ENCODE measurements at regions of chr9 and their contacts with region 1.

Region 1: DNA sequence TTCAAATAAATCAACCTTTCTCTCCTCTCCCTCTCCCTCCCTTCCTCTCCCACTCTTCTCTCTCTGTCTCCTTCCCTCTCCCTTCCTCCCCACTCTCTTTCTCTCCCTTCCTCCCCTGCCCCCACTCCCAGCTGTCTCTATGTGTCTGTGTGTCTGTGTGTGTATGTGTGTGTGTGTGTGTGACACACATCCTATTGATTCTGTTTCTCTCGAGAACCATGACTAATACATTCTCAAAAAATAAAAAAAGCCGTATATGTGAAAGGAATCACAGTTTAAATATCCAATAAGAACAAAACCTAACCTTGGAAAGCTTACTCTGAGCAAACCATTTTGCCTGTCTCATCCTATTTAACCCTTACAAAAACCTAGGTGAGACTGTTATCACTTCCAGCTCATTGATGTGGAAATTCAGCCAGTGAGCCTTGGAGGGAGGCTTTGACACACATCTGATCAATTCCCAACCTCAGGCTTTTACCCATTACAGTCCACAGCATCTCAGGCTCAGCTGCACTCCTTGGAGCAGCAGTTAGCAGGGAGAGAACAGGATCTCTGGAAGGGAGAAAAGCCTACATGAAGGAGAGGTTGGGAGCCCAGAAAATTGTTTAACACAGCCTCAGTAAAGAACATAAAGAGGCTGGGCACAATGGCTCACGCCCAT is 8.3 kb downstream of the HSD17B3 start:
- DNase-seq: peak; percentile 52
- H3K4me3 ChIP-seq: no peak overlapping the region
- H3K27ac ChIP-seq: no peak overlapping the region
- H3K4me1 ChIP-seq: peaks cover 5% of the 10 kb centered on the region
- H3K27me3 ChIP-seq: peaks cover 8% of the 10 kb centered on the region
- CTCF ChIP-seq: no peak

Region 2: GRCh38 chr9:95552814-95553546 is 740.6 kb before region 1 on chr9:
- CTCF ChIA-PET with region 1: no interaction called
- dilution Hi-C with region 1: no loop called
- in situ Hi-C with region 1: no loop called
- intact Hi-C with region 1: no loop called
- DNase-seq: no peak
- H3K4me3 ChIP-seq: no peak overlapping the region
- H3K27ac ChIP-seq: no peak overlapping the region
- H3K4me1 ChIP-seq: no peaks in the 10 kb centered on the region
- H3K27me3 ChIP-seq: peaks cover 2% of the 10 kb centered on the region
- CTCF ChIP-seq: no peak

Region 3: DNA sequence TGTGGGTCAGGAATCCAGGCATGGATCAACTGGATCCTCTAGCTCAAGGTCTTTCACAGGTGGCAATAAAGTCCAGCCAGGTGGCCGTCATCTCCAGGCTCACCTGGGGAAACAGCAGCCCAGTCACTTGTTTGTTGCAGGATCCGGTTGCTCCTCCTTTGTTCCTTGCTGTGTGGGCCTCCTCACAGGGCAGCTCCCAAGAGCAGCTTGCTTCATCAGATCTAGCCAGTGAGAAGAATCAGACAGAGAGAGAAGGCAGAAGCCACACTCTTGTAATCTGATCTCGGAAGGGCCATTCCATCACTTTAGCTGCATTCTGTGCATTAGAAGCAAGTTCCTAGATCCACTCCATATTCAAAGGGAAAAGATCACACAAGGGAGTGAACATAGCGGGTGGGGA is 11.5 kb after region 1 on chr9:
- CTCF ChIA-PET with region 1: no interaction called
- dilution Hi-C with region 1: no loop called
- in situ Hi-C with region 1: no loop called
- intact Hi-C with region 1: no loop called
- DNase-seq: no peak
- H3K4me3 ChIP-seq: no peak overlapping the region
- H3K27ac ChIP-seq: no peak overlapping the region
- H3K4me1 ChIP-seq: peaks cover 9% of the 10 kb centered on the region
- H3K27me3 ChIP-seq: peaks cover 24% of the 10 kb centered on the region
- CTCF ChIP-seq: no peak

Region 4: DNA sequence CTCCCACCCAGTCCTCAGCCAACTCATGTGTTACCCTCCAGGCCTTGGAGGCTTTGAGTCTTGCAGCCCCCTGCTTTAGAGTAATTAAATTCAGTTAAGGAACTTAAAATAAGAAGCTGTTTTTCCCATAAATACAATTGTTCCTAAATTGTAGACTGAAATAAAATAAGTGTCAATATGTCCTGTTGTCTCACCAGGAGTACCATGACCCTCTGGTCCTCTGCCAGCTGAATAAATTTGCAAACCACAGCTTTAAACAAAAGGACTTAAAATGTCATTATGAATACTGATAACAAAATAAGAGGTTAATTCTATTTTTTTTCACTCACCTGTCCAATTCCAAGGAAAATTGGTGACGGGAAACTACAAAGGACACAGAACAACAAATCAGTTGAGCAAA is 74.3 kb after region 1 on chr9:
- CTCF ChIA-PET with region 1: no interaction called
- dilution Hi-C with region 1: loop called (anchors 5 kb)
- in situ Hi-C with region 1: no loop called
- intact Hi-C with region 1: no loop called
- DNase-seq: no peak
- H3K4me3 ChIP-seq: no peak overlapping the region
- H3K27ac ChIP-seq: no peak overlapping the region
- H3K4me1 ChIP-seq: no peaks in the 10 kb centered on the region
- H3K27me3 ChIP-seq: no peaks in the 10 kb centered on the region
- CTCF ChIP-seq: no peak